ENCODE measurements at regions of chr3 and their contacts with region 1.

Region 1: GRCh38 chr3:9649791-9650521 is 651 bp downstream of the MTMR14 start:
- DNase-seq: no peak

Region 2: DNA sequence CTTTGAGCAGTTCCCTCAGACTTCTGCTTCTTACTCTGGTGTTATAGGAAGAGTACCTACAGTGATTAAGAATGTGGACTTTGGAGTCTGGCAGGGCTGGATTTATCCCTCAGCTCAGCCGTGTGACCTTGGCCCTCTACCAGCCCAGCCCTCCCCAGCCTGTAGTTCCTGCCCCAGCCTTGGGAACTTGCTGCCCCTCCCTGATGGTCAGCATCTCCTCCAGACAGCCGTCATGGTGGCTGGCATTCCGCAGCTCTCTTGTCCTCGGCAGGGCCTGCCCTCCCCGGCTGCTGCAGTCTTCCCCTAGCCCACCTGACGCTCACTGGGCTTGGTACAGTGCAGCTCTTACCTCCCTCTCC is 31.7 kb after region 1 on chr3:
- intact Hi-C with region 1: no loop called
- DNase-seq: peak in 1 of 10 donors; percentile 77

Region 3: DNA sequence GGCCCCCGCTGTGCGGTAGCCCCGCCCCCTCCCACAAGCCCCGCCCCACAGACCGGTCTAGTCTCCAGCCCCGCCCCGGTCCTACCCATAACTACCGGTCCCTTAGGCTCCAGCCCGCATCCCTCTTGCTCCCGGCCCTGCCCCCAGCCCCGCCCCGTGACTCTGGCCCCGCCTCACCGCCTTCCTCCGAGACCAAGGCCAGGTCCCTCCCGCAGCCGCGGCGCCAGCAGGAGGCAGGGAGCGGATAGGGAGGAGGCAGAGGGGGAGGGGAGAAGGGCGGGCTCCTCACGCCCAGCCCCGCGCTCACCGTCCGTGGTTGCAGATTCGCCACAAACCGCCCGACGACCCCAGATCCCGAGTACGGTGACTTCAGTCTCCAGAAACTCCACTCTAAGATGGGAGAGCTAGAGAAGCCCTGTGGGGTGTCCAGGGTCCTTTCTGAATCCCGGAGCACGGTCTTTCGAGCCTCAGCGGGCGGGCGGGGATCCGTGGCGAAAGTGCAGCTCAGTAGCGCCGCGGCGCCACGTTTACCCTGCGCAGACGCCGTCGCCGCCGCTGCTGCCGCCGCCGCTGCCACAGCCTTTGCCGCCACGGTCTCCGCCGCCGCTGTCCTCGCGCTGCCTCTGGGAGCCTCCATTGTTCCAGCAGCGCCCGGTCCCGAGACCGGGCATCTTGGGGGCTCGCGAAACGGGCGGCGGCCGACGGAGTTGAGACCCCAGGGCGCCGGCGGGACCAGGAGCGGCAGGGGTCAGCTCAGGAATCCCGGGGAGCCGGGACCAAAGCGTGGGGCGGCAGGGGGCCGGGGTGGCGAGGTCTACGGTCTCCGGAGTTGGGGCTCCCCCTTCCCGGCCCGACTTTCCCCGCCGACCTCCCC is 81.5 kb after region 1 on chr3 and contains the start of gene BRPF1:
- intact Hi-C with region 1: loop called (anchors 5 kb)
- DNase-seq: peak; percentile 97 to 100 (median 99)

Measured in posterior cingulate gyrus (tissue), 11 donors.